ENCODE measurements at regions of chr1 and their contacts with region 1.

Region 1: GRCh38 chr1:44652445-44653106 is 21.7 kb downstream of the TMEM53 start:
- DNase-seq: peak; percentile 84
- CTCF ChIP-seq: peak; percentile 98

Region 2: GRCh38 chr1:44377925-44378784 is 274.4 kb before region 1 on chr1:
- CTCF ChIA-PET with region 1: interaction called, 23 read pairs
- POLR2A ChIA-PET with region 1: no interaction called
- DNase-seq: peak; percentile 59
- CTCF ChIP-seq: peak; percentile 56

Region 3: GRCh38 chr1:44571712-44572571 is 80.6 kb before region 1 on chr1:
- CTCF ChIA-PET with region 1: interaction called, 56 read pairs
- POLR2A ChIA-PET with region 1: no interaction called
- DNase-seq: peak; percentile 62
- CTCF ChIP-seq: peak; percentile 54

Region 4: DNA sequence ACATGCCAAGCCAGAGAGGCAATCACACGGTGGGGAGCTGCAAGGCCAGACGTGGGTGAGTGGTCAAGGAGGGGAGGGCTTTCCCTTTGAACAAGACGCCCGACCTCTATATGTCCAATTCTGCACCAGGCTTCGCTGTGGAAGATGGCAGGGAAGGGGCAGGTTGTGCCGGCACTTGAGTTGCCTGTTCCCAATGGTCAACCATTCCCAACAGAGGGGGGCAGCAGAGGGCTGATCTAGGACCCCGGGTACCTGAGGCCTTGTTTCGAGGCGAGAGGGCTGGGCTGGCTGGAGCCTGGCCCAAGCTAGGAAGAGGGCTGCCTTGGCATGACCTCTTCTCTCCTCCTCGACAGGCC is 43.2 kb before region 1 on chr1:
- CTCF ChIA-PET with region 1: interaction called, 79 read pairs
- POLR2A ChIA-PET with region 1: no interaction called
- DNase-seq: peak; percentile 67
- CTCF ChIP-seq: peak; percentile 42

Region 5: DNA sequence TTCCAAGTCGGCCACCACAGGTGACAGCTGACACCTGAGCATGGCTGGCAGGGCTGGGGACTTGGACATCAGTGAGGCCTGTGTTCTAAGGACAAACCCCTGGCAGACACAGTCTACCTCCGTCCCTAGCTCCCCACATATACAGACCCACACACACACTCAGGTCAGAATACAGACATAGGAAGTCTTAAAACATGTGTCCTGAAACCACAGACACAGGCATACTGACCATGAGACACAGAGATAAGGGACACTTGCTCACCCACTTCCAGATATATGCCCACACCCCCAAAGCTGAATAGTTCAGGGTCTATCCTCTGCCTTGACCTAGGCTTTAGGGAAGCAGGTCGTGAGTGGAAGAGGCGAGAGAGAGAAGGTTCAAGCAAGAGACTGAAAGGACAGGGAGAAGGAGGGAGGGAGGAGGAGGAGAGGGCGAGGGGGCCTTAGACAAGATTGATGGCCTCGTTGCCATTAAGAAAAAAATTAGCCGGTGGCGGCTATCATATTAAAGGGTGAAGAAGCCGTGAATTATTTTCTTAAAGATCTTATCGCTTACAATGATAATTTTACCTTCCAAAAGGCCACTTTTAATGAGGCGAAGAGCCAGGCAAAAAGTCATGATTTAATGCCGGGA is 28.2 kb before region 1 on chr1:
- CTCF ChIA-PET with region 1: interaction called, 13 read pairs
- POLR2A ChIA-PET with region 1: no interaction called
- DNase-seq: no peak
- CTCF ChIP-seq: no peak

Region 6: GRCh38 chr1:44640200-44640853 is 12.2 kb before region 1 on chr1:
- CTCF ChIA-PET with region 1: interaction called, 204 read pairs
- POLR2A ChIA-PET with region 1: interaction called, 8 read pairs
- DNase-seq: no peak
- CTCF ChIP-seq: no peak

Measured in GM10248 (cell line).